A673 (cell line): ENCODE measurements at regions of chr15 and their contacts with region 1.

Region 1: DNA sequence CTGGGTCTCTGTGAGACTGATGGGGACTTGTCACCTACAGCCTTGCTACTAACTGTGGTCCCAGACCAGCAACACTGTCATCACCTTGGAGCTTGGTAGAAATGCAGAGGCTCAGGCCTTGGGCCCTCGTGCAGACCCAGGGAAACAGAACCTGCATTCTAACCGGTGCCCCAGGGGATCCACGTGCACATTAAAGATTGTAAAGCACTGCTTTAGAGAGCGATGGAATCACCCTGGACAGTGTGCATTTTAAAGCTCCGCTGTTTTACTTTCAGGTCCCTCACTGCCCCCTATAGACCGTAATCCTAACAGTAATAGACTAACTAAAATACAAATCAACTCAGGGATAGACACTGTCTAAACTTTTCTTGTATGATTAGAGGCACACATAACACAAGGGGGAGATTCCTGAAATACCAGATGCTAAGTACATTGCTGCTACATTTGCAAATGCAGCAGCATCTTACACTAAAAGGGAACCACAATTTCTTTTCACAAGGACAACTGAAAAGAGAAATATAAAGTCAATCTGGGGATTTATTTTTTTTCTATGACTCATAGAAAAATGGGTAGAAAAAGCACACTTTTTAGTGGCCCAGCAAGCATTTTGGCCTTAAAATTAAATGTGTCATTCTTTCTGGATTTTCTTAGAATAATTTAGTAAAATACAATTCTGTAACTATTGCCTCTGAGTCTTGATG is 10.5 kb upstream of the SH3GL3 start:
- DNase-seq: peak; percentile 74
- H3K4me3 ChIP-seq: no peak overlapping the region
- H3K27ac ChIP-seq: no peak overlapping the region
- H3K4me1 ChIP-seq: no peaks in the 10 kb centered on the region
- H3K27me3 ChIP-seq: no peaks in the 10 kb centered on the region
- CTCF ChIP-seq: peak; percentile 67

Region 2: GRCh38 chr15:83248151-83249029 is 188.2 kb before region 1 on chr15:
- CTCF ChIA-PET with region 1: interaction called, 35 read pairs
- POLR2A ChIA-PET with region 1: no interaction called
- intact Hi-C with region 1: loop called (anchors 1 kb)
- DNase-seq: peak; percentile 73
- H3K4me3 ChIP-seq: no peak overlapping the region
- H3K27ac ChIP-seq: no peak overlapping the region
- H3K4me1 ChIP-seq: no peaks in the 10 kb centered on the region
- H3K27me3 ChIP-seq: peaks cover 6% of the 10 kb centered on the region
- CTCF ChIP-seq: peak; percentile 90

Region 3: DNA sequence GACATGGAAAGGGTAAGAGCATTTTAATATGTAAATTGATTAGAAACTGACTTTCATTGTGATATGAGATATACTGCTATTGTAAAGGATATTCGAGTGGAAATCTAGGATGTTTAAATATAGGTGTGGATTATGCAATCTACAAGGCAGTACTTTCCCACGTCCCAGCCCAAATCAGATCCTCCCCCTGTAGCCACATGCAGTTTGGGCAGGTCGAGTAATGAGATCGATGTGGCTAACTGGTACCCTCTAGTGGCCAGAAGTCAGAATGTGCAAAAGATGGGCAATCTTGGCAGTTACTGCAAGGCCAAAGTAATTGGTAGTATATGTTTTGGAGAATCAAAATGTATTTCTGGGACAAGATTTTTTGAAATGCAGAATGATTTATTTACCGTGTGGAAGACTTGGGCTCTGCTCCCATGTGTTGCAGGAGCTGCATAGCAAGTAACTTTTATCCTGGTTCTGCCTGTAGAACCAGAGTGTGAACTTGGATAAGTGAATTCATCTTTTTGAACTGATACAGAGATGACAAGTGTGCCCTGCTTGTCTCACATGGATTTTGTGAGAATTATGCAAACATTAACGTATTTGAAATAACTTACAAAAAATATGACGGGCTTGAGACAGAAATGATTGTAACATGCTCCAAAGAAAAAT is 122.8 kb after region 1 on chr15:
- CTCF ChIA-PET with region 1: interaction called, 3 read pairs
- POLR2A ChIA-PET with region 1: no interaction called
- intact Hi-C with region 1: loop called (anchors 1 kb)
- DNase-seq: peak; percentile 85
- H3K4me3 ChIP-seq: no peak overlapping the region
- H3K27ac ChIP-seq: no peak overlapping the region
- H3K4me1 ChIP-seq: no peaks in the 10 kb centered on the region
- H3K27me3 ChIP-seq: no peaks in the 10 kb centered on the region
- CTCF ChIP-seq: peak; percentile 86

Region 4: DNA sequence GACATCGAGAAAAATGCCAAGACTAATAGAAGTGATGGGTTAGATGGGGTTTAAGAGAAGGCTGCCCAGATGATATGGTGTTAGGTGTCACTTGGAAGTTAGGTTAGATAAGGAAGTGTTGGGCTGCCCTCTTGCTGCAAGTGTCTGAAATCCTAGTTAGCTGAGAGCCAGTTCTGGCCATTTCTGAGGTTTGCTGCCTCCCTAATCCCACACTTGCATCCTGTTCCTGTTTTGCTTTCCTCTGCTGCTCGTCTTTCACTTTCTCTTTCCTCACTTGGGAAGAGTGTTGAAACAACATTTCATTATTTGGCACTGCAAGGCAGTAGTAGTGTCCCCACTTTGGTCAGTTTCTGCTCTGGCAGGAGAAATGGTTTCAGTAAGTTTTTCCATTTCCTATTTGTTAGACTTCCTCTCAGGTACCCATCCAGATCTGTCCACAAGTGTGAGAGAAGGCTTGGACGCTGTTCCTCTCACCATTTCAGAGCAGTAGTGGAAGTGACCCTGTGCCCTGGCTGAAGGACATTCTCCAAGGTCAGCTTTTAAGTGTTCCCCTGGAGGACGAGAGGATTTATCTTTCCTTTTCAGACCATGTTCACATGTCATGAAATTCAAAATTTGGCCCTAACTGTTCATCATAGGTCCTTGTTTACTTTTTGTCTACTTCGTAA is 310.6 kb after region 1 on chr15:
- CTCF ChIA-PET with region 1: no interaction called
- POLR2A ChIA-PET with region 1: no interaction called
- intact Hi-C with region 1: loop called (anchors 10 kb)
- DNase-seq: peak; percentile 21
- H3K4me3 ChIP-seq: no peak overlapping the region
- H3K27ac ChIP-seq: no peak overlapping the region
- H3K4me1 ChIP-seq: no peaks in the 10 kb centered on the region
- H3K27me3 ChIP-seq: no peaks in the 10 kb centered on the region
- CTCF ChIP-seq: peak; percentile 34; the same call in 1 of the 2 replicates

Region 5: GRCh38 chr15:83848315-83849050 is 411.9 kb after region 1 on chr15:
- CTCF ChIA-PET with region 1: no interaction called
- POLR2A ChIA-PET with region 1: no interaction called
- intact Hi-C with region 1: loop called (anchors 10 kb)
- DNase-seq: peak; percentile 78
- H3K4me3 ChIP-seq: no peak overlapping the region
- H3K27ac ChIP-seq: no peak overlapping the region
- H3K4me1 ChIP-seq: peaks cover 18% of the 10 kb centered on the region
- H3K27me3 ChIP-seq: no peaks in the 10 kb centered on the region
- CTCF ChIP-seq: no peak

Region 6: DNA sequence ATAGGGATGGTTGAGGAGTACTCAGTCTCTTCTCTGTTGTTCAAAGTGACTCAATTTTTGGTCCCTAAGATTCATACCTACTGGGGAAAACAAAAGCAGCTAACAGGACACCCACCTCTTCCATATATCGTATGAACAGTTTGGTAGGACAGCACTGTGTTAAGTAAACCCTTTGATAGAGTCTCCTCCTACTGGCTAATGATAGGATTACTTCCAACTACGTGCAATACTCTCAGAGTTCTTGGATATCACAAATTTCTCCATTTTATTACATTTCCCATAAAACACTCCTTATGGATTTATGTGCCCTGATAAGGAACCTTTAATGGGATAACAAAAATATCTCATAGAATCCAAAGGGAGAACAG is 598.8 kb after region 1 on chr15:
- CTCF ChIA-PET with region 1: no interaction called
- POLR2A ChIA-PET with region 1: no interaction called
- intact Hi-C with region 1: loop called (anchors 5 kb)
- DNase-seq: peak; percentile 59
- H3K4me3 ChIP-seq: no peak overlapping the region
- H3K27ac ChIP-seq: no peak overlapping the region
- H3K4me1 ChIP-seq: no peaks in the 10 kb centered on the region
- H3K27me3 ChIP-seq: peaks cover 7% of the 10 kb centered on the region
- CTCF ChIP-seq: peak; percentile 57